Heart left ventricle (tissue), 16 donors: ENCODE measurements at regions of chr1 and their contacts with region 1.

Region 1: DNA sequence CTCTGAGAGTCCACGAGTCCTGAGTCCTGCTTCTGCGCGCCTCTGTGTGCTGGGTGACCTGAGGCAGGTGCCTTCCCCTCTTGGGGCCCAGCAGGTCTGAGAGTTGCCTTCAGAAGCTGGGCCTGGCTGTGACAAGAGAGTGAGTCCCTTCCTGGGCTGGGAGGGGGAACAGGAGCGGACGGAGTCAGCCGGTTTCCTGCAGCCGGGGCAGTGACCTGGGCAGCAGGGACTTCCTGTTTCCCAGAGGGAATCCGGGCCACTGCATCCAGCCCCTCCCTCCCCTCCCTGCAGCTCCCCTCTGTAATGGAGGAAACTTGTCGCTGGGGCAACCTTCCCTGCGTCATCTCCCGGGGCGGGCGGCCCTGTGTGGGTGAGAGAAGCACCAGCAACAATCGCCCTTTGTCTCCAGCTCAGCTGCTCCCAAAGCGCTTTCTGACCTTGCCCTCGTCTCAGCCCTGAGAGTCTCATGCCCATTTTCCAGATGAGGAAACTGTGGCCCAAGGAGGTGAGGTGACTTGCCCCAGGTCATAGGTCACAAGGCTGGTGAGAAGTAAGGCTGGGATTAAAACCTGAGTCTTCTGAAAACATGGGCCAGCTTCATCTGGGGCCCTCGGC is 61.1 kb downstream of the SDC3 start:
- DNase-seq: peak; percentile 89 to 94 (median 91)
- ATAC-seq: peak; percentile 73 to 94 (median 92)
- H3K4me3 ChIP-seq: no peak overlapping the region
- H3K27ac ChIP-seq: peak overlapping the region; percentile 60 to 90 (median 82)
- H3K4me1 ChIP-seq: peaks cover 0 to 34% (median 20%) of the 10 kb centered on the region in 12 donors
- H3K27me3 ChIP-seq: peaks cover 0 to 33% (median 0%) of the 10 kb centered on the region in 9 donors
- CTCF ChIP-seq: no peak
- POLR2A ChIP-seq: no peak

Region 2: GRCh38 chr1:30801771-30802198 is 45.7 kb before region 1 on chr1:
- intact Hi-C with region 1: loop called in 3 of 10 experiments (anchors 5 kb)
- DNase-seq: peak; percentile 75 to 92 (median 81)
- ATAC-seq: peak; percentile 58 to 77 (median 66)
- H3K4me3 ChIP-seq: peak overlapping the region in 1 of 12 donors; percentile 33
- H3K27ac ChIP-seq: peak overlapping the region in 1 of 12 donors; percentile 46
- H3K4me1 ChIP-seq: peaks cover 3 to 43% (median 16%) of the 10 kb centered on the region in 12 donors
- H3K27me3 ChIP-seq: peaks cover 0 to 15% (median 0%) of the 10 kb centered on the region in 9 donors
- CTCF ChIP-seq: peak; percentile 93 to 99 (median 96)
- POLR2A ChIP-seq: no peak

Region 3: GRCh38 chr1:30809514-30810263 is 37.8 kb before region 1 on chr1:
- intact Hi-C with region 1: loop called in 3 of 10 experiments (anchors 5 kb)
- DNase-seq: no peak
- ATAC-seq: peak in 3 of 4 donors; percentile 61 to 82 (median 63)
- H3K4me3 ChIP-seq: no peak overlapping the region
- H3K27ac ChIP-seq: peak overlapping the region in 6 of 12 donors; percentile 10 to 77 (median 14)
- H3K4me1 ChIP-seq: peaks cover 3 to 35% (median 25%) of the 10 kb centered on the region in 12 donors
- H3K27me3 ChIP-seq: peaks cover 0 to 35% (median 0%) of the 10 kb centered on the region in 9 donors
- CTCF ChIP-seq: no peak
- POLR2A ChIP-seq: no peak

Region 4: DNA sequence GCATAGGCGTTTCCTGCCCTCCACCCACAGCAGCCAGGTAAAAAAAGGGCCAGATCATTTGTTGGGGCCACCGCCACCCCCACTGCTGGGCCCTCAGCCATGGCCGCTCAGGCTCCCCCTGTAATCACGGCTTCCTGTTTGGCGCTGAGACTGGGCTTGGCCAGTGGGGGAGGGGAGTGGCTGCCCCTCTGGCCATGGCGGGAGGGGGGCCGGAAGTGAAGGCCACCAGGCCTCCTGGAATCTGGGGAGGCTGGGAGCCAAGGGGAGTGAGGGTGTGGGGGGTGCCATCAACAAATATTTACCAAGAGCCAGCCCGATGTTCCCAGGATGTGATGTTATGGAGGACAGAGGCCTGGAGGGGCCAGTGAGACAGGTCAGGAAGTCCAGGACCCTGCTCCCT is 54.7 kb after region 1 on chr1:
- intact Hi-C with region 1: loop called in 6 of 10 experiments (anchors 5 to 10 kb)
- DNase-seq: peak; percentile 52 to 72 (median 64)
- ATAC-seq: peak; percentile 33 to 89 (median 51)
- H3K4me3 ChIP-seq: no peak overlapping the region
- H3K27ac ChIP-seq: peak overlapping the region; percentile 15 to 88 (median 70)
- H3K4me1 ChIP-seq: peaks cover 5 to 44% (median 32%) of the 10 kb centered on the region in 12 donors
- H3K27me3 ChIP-seq: no peaks in the 10 kb centered on the region
- CTCF ChIP-seq: no peak
- POLR2A ChIP-seq: no peak